ENCODE measurements at regions of chr6 and their contacts with region 1.

Region 1: GRCh38 chr6:11343963-11344747 is 111.7 kb upstream of the NEDD9 start:
- DNase-seq: peak; percentile 85 to 90
- H3K4me3 ChIP-seq: no peak overlapping the region
- H3K4me3 Mint-ChIP-seq: peak overlapping the region; percentile 35
- H3K27ac Mint-ChIP-seq: peak overlapping the region; percentile 92
- H3K4me1 ChIP-seq: peaks cover 42% of the 10 kb centered on the region
- H3K4me1 Mint-ChIP-seq: peaks cover 44% of the 10 kb centered on the region
- H3K27me3 ChIP-seq: no peaks in the 10 kb centered on the region
- H3K27me3 Mint-ChIP-seq: no peaks in the 10 kb centered on the region
- CTCF ChIP-seq: no peak

Region 2: DNA sequence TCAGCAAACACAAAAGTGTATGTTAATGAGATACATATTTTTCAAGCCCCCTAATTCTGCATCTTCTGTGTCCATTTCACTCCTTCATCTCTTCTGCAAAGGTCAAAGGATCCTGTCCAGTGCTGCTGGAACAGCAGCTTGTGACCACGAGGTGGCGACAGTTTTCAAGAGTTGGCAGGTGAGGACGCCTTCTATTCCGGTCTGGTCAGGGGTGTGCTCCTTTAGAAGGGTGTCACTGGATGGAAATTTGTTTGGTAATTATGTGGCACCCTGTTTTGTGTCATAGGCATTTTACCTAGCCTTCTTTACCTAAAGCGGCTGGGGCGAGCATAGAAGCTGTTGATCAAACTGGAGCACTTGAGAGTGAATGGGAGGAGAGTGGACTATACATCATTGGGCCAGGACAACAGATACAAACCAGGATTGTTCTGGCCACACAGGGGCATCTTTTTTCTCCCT is 199.7 kb before region 1 on chr6:
- CTCF ChIA-PET with region 1: no interaction called
- POLR2A ChIA-PET with region 1: no interaction called
- intact Hi-C with region 1: loop called (anchors 5 kb)
- DNase-seq: peak; percentile 76 to 83
- H3K4me3 ChIP-seq: no peak overlapping the region
- H3K4me3 Mint-ChIP-seq: no peak overlapping the region
- H3K27ac Mint-ChIP-seq: peak overlapping the region; percentile 31
- H3K4me1 ChIP-seq: peaks cover 10% of the 10 kb centered on the region; the same call in 1 of the 2 replicates
- H3K4me1 Mint-ChIP-seq: peaks cover 19% of the 10 kb centered on the region
- H3K27me3 ChIP-seq: no peaks in the 10 kb centered on the region
- H3K27me3 Mint-ChIP-seq: no peaks in the 10 kb centered on the region
- CTCF ChIP-seq: peak; percentile 93 to 94

Region 3: GRCh38 chr6:11218538-11219399 is 125.4 kb before region 1 on chr6:
- CTCF ChIA-PET with region 1: no interaction called
- POLR2A ChIA-PET with region 1: no interaction called
- intact Hi-C with region 1: loop called (anchors 5 kb)
- DNase-seq: no peak
- H3K4me3 ChIP-seq: no peak overlapping the region
- H3K4me3 Mint-ChIP-seq: peak overlapping the region; percentile 29
- H3K27ac Mint-ChIP-seq: peak overlapping the region; percentile 69
- H3K4me1 ChIP-seq: peaks cover 32% of the 10 kb centered on the region
- H3K4me1 Mint-ChIP-seq: peaks cover 34% of the 10 kb centered on the region
- H3K27me3 ChIP-seq: no peaks in the 10 kb centered on the region
- H3K27me3 Mint-ChIP-seq: no peaks in the 10 kb centered on the region
- CTCF ChIP-seq: no peak

Region 4: DNA sequence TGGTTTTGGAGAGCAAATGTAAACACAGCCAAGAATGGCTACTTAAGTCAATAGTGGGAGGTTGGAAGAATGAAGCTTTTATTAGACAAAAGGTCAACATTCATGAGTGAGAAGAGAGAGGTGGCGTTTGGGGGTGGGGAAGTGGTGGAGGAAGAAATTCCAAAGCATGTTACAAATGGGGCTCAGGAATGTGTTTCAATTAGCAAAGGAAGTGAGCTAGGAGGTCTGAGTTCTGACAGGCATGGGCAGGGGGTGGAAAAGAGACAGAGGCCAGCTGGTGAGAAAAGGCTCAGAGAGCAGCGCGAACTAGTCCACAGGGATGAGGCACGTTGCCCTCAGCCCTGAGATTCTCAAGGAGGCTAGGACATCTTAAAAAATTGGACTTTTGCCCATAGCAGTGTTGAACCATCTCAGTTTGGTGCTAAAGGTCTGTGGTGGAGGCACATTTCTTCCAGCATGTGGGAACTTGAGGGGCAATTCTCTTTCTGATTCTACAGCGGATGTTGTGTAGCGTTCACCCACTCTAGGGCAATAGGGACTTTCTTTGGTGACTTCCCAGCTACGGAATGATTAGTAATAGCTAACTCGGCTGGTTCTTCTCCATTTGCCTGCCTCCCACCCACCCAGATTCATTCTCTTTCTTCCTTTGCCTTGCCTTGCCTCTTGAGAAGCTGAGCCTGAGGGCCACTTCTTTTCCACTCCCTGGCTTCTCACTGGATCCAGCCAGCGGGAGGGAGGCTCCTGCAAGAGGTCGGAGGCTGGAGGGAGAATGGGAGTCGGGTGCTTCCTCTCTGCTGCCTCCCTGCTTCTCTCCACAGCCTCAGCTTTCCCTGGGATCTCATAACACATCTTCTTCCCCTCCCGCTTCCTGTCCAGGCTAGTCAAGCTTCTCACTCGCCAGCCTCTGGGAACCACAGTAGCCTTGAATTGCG is 66.6 kb before region 1 on chr6:
- CTCF ChIA-PET with region 1: no interaction called
- POLR2A ChIA-PET with region 1: no interaction called
- intact Hi-C with region 1: loop called (anchors 1 kb)
- DNase-seq: peak; percentile 77 to 84
- H3K4me3 ChIP-seq: no peak overlapping the region
- H3K4me3 Mint-ChIP-seq: peak overlapping the region; percentile 15
- H3K27ac Mint-ChIP-seq: peak overlapping the region; percentile 95
- H3K4me1 ChIP-seq: peaks cover 38% of the 10 kb centered on the region
- H3K4me1 Mint-ChIP-seq: peaks cover 39% of the 10 kb centered on the region
- H3K27me3 ChIP-seq: no peaks in the 10 kb centered on the region
- H3K27me3 Mint-ChIP-seq: no peaks in the 10 kb centered on the region
- CTCF ChIP-seq: no peak

Region 5: DNA sequence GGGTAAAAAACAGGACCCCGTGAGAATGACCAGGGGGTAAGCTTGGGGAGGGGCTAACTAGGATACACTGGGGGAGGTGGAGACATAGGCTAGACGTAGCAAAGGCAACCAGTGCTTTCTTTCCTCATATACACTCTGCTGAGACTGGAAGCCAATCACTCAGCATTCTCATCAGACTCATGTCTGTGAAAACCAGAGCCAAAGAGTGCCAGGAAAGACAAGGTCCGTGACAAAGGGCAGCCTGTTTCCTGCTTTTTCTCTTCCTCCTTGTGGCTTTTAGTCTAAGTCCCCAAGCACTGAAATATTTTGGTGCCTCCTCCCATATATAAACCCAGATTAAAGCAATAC is 13.8 kb before region 1 on chr6:
- CTCF ChIA-PET with region 1: no interaction called
- POLR2A ChIA-PET with region 1: no interaction called
- intact Hi-C with region 1: no loop called
- DNase-seq: no peak
- H3K4me3 ChIP-seq: no peak overlapping the region
- H3K4me3 Mint-ChIP-seq: no peak overlapping the region
- H3K27ac Mint-ChIP-seq: no peak overlapping the region
- H3K4me1 ChIP-seq: peaks cover 6% of the 10 kb centered on the region; the same call in 1 of the 2 replicates
- H3K4me1 Mint-ChIP-seq: peaks cover 5% of the 10 kb centered on the region
- H3K27me3 ChIP-seq: no peaks in the 10 kb centered on the region
- H3K27me3 Mint-ChIP-seq: no peaks in the 10 kb centered on the region
- CTCF ChIP-seq: no peak

Region 6: GRCh38 chr6:11366183-11366933 is 22.2 kb after region 1 on chr6:
- CTCF ChIA-PET with region 1: no interaction called
- POLR2A ChIA-PET with region 1: interaction called, 11 read pairs
- intact Hi-C with region 1: loop called (anchors 1 kb)
- DNase-seq: no peak
- H3K4me3 ChIP-seq: no peak overlapping the region
- H3K4me3 Mint-ChIP-seq: peak overlapping the region; percentile 46
- H3K27ac Mint-ChIP-seq: peak overlapping the region; percentile 99
- H3K4me1 ChIP-seq: peaks cover 59% of the 10 kb centered on the region
- H3K4me1 Mint-ChIP-seq: peaks cover 51% of the 10 kb centered on the region
- H3K27me3 ChIP-seq: no peaks in the 10 kb centered on the region
- H3K27me3 Mint-ChIP-seq: no peaks in the 10 kb centered on the region
- CTCF ChIP-seq: no peak

Region 7: GRCh38 chr6:11392778-11393507 is 48.8 kb after region 1 on chr6:
- CTCF ChIA-PET with region 1: no interaction called
- POLR2A ChIA-PET with region 1: no interaction called
- intact Hi-C with region 1: loop called (anchors 1 kb)
- DNase-seq: peak; percentile 57 to 67
- H3K4me3 ChIP-seq: no peak overlapping the region
- H3K4me3 Mint-ChIP-seq: no peak overlapping the region
- H3K27ac Mint-ChIP-seq: peak overlapping the region; percentile 89
- H3K4me1 ChIP-seq: peaks cover 58% of the 10 kb centered on the region
- H3K4me1 Mint-ChIP-seq: peaks cover 37% of the 10 kb centered on the region
- H3K27me3 ChIP-seq: no peaks in the 10 kb centered on the region
- H3K27me3 Mint-ChIP-seq: no peaks in the 10 kb centered on the region
- CTCF ChIP-seq: no peak

Region 8: DNA sequence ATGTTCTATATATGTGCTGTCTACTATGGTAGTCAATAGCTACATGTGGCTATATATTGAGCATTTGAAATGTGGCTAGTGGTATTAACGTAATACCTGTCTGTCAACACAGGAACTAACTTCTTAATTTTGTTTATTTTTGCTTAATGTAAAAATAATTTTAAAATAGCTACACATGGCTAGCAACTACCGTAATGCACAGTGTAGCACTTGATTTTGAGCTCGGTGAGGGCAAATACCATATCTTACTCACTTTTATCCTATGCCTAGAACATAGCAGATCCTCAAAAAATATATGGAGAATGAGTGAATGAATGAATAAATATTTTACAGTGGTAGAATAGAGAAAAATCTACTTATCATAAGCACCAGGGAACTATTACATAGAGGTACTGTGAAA is 165.3 kb after region 1 on chr6:
- CTCF ChIA-PET with region 1: no interaction called
- POLR2A ChIA-PET with region 1: no interaction called
- intact Hi-C with region 1: no loop called
- DNase-seq: no peak
- H3K4me3 ChIP-seq: no peak overlapping the region
- H3K4me3 Mint-ChIP-seq: no peak overlapping the region
- H3K27ac Mint-ChIP-seq: no peak overlapping the region
- H3K4me1 ChIP-seq: no peaks in the 10 kb centered on the region
- H3K4me1 Mint-ChIP-seq: no peaks in the 10 kb centered on the region
- H3K27me3 ChIP-seq: no peaks in the 10 kb centered on the region
- H3K27me3 Mint-ChIP-seq: peaks cover 4% of the 10 kb centered on the region
- CTCF ChIP-seq: no peak

Measured in Caco-2 (cell line).